ENCODE measurements at regions of chr14 and their contacts with region 1.

Region 1: DNA sequence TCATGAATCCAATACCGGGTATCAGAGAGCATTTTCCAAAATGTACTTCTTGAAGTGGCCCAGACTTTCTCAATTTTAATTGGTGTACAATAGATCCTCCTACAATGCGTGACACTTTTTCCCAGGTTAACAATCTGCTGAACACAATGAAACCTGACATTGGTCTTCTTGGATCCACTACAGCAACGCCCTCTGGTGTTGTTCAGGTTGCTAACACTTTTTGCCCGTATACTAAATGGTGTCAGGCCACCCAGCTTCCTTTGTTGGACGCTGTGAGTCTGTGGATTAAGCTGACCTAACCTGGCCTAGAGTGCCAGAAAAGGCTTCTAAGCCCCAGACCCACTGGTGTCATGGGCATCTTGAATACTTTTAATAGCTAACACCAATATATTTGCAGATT is 89.2 kb downstream of the KCNK10 start:
- DNase-seq: peak; percentile 57
- H3K4me3 Mint-ChIP-seq: no peak overlapping the region
- H3K27ac Mint-ChIP-seq: no peak overlapping the region
- H3K4me1 Mint-ChIP-seq: no peaks in the 10 kb centered on the region
- H3K27me3 Mint-ChIP-seq: peaks cover 7% of the 10 kb centered on the region

Region 2: DNA sequence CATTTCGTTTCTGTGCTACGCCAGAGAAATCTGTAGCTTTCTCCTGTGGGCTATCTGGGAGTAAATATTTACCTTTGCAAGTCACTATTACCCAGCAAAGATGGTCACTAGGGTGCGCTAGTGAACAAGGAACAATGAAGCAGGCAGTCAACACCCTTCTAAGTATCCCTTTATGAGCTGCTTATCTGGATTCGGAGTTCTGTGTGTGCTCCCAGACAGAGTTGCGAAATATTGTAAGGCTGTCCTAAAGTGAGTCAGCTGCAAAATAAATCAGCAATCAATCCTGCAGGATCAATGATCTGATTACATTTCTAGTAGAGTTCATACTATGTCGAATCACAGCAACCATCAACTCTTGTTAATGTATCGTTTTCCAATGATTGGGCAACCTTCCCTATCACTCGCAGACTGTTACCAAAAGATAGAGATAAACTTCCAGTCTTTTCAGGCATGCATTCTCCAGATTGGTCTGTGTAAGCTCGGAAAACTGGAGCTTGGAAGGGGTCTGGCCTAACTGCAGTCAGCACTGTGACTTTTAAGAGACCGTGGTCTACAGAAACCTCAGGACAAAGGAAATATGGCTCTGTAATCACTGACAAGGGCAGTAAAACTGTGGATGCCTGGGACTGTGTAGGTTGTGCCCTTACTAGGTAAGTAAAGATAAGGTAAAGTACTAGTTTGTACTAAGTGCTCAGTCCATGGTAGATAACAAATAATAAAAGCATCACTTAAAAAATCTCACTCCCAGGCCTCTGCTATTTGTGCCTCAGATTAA is 44.3 kb before region 1 on chr14:
- intact Hi-C with region 1: loop called (anchors 10 kb)
- DNase-seq: peak; percentile 87
- H3K4me3 Mint-ChIP-seq: no peak overlapping the region
- H3K27ac Mint-ChIP-seq: no peak overlapping the region
- H3K4me1 Mint-ChIP-seq: peaks cover 5% of the 10 kb centered on the region
- H3K27me3 Mint-ChIP-seq: peaks cover 11% of the 10 kb centered on the region

Region 3: GRCh38 chr14:88248606-88249005 is 14.7 kb after region 1 on chr14:
- intact Hi-C with region 1: no loop called
- DNase-seq: no peak
- H3K4me3 Mint-ChIP-seq: no peak overlapping the region
- H3K27ac Mint-ChIP-seq: no peak overlapping the region
- H3K4me1 Mint-ChIP-seq: no peaks in the 10 kb centered on the region
- H3K27me3 Mint-ChIP-seq: peaks cover 2% of the 10 kb centered on the region